ENCODE measurements at regions of chr20 and their contacts with region 1.

Region 1: GRCh38 chr20:38472513-38473372 is at the start of gene RALGAPB:
- DNase-seq: peak; percentile 96 to 100
- ATAC-seq: peak; percentile 92 to 93 (median 92)
- H3K4me3 ChIP-seq: peak within 1 kb of the TSS; percentile 82
- H3K4me3 Mint-ChIP-seq: peak within 1 kb of the TSS; percentile 95
- H3K27ac ChIP-seq: peak within 1 kb of the TSS; percentile 56
- H3K27ac Mint-ChIP-seq: peak within 1 kb of the TSS; percentile 91 to 93
- H3K4me1 ChIP-seq: peaks cover 15% of the 10 kb centered on the region
- H3K4me1 Mint-ChIP-seq: peaks cover 39 to 44% of the 10 kb centered on the region in 2 donors
- H3K27me3 ChIP-seq: no peaks in the 10 kb centered on the region
- H3K27me3 Mint-ChIP-seq: peaks cover 0 to 3% of the 10 kb centered on the region in 2 donors
- CTCF ChIP-seq: no peak
- total RNA-seq, gene RALGAPB: 45.1 to 73.1 (median 57.4) TPM

Region 2: GRCh38 chr20:38434743-38435554 is 37.8 kb before region 1 on chr20 and contains the start of gene SNHG17:
- intact Hi-C with region 1: loop called (anchors 1 kb)
- DNase-seq: peak; percentile 87 to 97
- ATAC-seq: peak; percentile 91 to 96 (median 93)
- H3K4me3 ChIP-seq: peak within 1 kb of the TSS; percentile 94
- H3K4me3 Mint-ChIP-seq: peak within 1 kb of the TSS; percentile 93
- H3K27ac ChIP-seq: peak within 1 kb of the TSS; percentile 88
- H3K27ac Mint-ChIP-seq: peak within 1 kb of the TSS; percentile 88 to 92
- H3K4me1 ChIP-seq: peaks cover 19% of the 10 kb centered on the region
- H3K4me1 Mint-ChIP-seq: peaks cover 43 to 44% of the 10 kb centered on the region in 2 donors
- H3K27me3 ChIP-seq: no peaks in the 10 kb centered on the region
- H3K27me3 Mint-ChIP-seq: peaks cover 8 to 10% of the 10 kb centered on the region in 2 donors
- CTCF ChIP-seq: peak; percentile 100
- total RNA-seq, gene SNHG17: 53.5 to 64.0 (median 53.8) TPM

Region 3: DNA sequence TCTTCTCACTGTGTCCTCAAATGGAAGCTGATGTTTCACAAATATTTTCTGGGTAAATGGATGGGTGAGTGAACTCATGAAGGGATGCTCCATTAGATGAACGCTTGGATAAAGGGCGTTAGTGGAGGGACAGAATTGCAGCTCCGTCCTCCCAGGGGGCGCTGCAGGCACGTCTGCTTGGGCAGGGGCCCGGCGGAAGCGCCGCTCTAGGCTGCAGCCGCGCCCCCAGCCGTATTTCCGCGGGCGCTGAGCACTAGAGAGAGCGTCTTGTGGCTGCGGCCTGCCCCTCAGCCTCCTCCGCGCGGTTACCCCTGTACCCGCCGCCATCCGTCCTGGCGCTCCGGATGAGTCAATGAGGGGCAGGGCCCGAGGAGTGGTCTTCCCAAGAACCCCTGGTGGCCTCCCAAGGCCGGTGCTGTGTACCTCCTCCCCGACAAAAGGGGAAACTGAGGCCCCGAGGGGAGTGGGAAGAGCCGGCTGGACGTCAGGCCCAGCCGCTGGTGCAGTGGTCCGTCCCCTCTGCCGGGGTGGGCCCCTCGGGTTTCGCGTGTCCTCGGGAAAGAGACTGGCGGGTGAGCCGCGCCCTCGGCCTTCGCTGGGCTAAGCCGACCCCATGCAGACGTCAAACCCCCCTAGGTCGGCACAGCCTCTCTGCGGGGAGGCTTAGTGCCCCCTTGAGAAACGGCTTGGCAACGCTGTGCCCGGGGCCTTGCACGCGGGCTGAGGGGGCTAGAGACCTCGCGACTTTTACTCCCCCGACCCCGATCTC is 26.1 kb before region 1 on chr20:
- intact Hi-C with region 1: loop called (anchors 1 kb)
- DNase-seq: peak; percentile 91 to 97
- ATAC-seq: peak; percentile 96 to 98 (median 98)
- H3K4me3 ChIP-seq: peak overlapping the region; percentile 97
- H3K4me3 Mint-ChIP-seq: peak overlapping the region; percentile 92
- H3K27ac ChIP-seq: peak overlapping the region; percentile 85
- H3K27ac Mint-ChIP-seq: peak overlapping the region; percentile 81 to 88
- H3K4me1 ChIP-seq: peaks cover 25% of the 10 kb centered on the region
- H3K4me1 Mint-ChIP-seq: peaks cover 22 to 26% of the 10 kb centered on the region in 2 donors
- H3K27me3 ChIP-seq: no peaks in the 10 kb centered on the region
- H3K27me3 Mint-ChIP-seq: peaks cover 10 to 12% of the 10 kb centered on the region in 2 donors
- CTCF ChIP-seq: peak; percentile 100

Region 4: GRCh38 chr20:38485041-38485440 is 12.3 kb after region 1 on chr20:
- intact Hi-C with region 1: no loop called
- DNase-seq: no peak
- ATAC-seq: peak in 1 of 3 donors; percentile 44
- H3K4me3 ChIP-seq: no peak overlapping the region
- H3K4me3 Mint-ChIP-seq: no peak overlapping the region
- H3K27ac ChIP-seq: no peak overlapping the region
- H3K27ac Mint-ChIP-seq: no peak overlapping the region
- H3K4me1 ChIP-seq: no peaks in the 10 kb centered on the region
- H3K4me1 Mint-ChIP-seq: peaks cover 17 to 28% of the 10 kb centered on the region in 2 donors
- H3K27me3 ChIP-seq: no peaks in the 10 kb centered on the region
- H3K27me3 Mint-ChIP-seq: no peaks in the 10 kb centered on the region
- CTCF ChIP-seq: no peak